ENCODE measurements at regions of chr7 and their contacts with region 1.

Region 1: DNA sequence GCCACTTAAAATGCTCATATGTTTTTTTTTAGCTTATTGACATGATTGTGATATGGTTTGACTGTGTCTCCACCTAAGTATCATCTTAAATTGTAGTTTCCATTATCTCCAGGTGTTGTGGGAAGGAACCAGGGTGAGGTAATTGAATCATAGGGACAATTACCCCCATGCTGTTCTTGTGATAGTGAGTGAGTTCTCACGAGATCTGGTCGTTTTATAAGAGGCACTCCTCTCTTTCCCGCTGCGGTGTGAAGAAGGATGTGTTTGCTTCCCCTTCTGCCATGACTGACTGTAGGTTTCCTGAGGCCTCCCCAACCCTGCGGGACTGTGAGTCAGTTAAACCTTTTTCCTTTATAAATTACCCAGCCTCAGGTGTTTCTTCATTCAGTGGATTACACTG is 80.5 kb upstream of the ETV1 start:
- DNase-seq: no peak
- ATAC-seq: no peak
- H3K4me3 ChIP-seq: no peak overlapping the region
- H3K27ac ChIP-seq: no peak overlapping the region
- H3K4me1 ChIP-seq: no peaks in the 10 kb centered on the region
- H3K27me3 ChIP-seq: no peaks in the 10 kb centered on the region

Region 2: DNA sequence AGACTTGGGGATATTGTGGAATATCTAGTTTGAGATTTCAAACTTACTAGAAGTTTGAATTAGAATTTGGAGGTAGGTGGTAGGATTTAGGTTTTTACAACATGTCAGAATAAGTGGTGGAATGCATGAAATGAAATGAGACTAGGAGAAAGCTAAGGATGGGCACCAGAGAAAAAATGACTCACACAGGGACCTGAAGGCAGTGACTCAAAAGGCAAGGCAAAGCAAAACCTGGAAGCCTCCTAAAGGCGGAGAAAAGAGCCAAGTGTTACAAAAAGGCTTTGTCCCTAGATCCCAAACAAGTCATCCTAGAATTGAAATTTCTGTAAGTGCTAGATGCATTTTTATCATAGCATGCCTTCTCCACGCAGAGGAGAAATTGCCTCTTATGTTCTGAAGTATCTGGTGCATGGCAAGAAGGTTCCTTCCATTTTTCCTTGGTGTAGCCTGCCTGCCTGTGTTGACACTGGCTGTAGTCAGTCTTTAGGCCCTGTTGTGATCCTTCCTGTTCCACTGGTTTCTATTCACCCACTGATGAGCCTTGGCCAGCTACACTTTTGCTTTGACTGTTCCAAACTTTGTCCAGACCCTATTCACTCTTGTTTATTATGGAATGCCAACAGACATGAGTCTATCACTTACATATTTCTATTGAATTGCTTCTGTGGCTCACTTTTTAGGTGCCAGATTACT is 189.8 kb before region 1 on chr7:
- intact Hi-C with region 1: no loop called
- DNase-seq: no peak
- ATAC-seq: no peak
- H3K4me3 ChIP-seq: no peak overlapping the region
- H3K27ac ChIP-seq: no peak overlapping the region
- H3K4me1 ChIP-seq: no peaks in the 10 kb centered on the region
- H3K27me3 ChIP-seq: no peaks in the 10 kb centered on the region

Region 3: DNA sequence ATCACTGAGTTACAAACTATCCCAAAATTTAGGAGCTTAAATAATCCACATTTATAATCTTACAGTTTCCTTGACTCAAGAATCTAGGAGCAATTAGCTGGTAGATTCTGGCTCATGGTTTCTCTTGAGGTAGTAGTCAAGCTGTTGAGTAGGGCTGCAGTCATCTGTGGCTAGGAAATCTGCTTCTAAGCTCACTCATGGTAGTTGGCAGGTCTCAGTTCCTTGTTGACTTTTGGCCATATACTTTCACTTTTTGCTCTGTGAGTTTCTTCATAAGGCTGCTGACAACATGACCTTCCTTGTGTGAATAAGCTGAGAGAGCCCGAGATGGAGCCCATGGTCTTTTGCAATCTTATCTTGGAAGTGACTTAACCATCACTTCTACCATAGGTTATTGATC is 69.7 kb before region 1 on chr7:
- intact Hi-C with region 1: loop called in 1 of 4 experiments (anchors 10 kb)
- DNase-seq: no peak
- ATAC-seq: no peak
- H3K4me3 ChIP-seq: no peak overlapping the region
- H3K27ac ChIP-seq: no peak overlapping the region
- H3K4me1 ChIP-seq: no peaks in the 10 kb centered on the region
- H3K27me3 ChIP-seq: no peaks in the 10 kb centered on the region

Measured in right cardiac atrium (tissue), 5 donors.